MCF 10A (cell line): ENCODE measurements at regions of chr14 and their contacts with region 1.

Region 1: DNA sequence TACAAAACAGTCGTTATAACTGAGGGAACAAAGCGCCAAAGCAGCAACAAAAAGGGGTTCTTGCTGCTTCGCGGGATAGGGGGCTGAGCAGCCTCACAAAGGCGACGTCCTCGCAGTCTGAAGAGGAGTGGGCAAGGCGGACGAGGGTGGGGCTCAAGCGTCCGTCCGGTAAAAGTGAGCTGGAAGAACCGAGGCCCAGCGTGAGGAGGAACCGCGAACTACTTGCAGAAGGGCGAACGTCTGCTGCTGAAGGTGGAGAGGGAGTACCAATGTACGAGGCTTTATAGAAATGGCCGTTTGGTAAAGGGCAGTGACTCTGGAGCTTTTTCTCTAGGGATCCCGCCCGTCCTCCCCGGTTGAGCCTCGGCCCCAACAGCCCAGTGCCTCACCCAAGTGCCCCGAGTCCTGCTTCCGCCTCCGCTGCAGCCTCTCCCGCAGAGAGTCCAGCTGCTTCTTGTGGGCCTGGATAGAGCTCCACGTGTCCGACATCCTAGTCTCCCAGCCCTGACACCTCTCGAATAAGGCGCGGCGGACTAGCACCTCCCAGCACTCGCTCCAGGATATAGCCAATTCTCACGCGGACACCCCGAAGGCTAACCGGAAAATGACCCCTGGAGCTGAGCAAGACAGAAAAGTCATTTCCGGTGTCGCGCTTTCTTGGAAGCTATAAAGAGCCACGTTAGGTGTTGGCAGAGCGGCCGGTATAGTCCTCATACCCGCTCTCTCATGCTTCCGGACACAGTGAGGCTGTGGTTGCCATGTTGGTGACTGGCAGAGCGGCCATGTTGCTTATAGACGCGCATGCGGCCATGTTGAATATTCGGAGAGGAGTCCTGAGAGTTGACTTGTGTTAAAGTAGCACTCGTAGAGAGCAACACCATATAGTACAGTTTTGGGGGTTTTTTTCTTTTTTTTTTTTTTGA is at the start of gene METTL3:
- DNase-seq: peak; percentile 99
- H3K4me3 Mint-ChIP-seq: peak within 1 kb of the TSS; percentile 96
- H3K27ac Mint-ChIP-seq: peak within 1 kb of the TSS; percentile 95
- H3K4me1 Mint-ChIP-seq: peaks cover 13% of the 10 kb centered on the region
- H3K27me3 Mint-ChIP-seq: no peaks in the 10 kb centered on the region
- CTCF ChIP-seq: no peak
- total RNA-seq, gene METTL3: 36.4 and 46.7 TPM in 2 replicates

Region 2: DNA sequence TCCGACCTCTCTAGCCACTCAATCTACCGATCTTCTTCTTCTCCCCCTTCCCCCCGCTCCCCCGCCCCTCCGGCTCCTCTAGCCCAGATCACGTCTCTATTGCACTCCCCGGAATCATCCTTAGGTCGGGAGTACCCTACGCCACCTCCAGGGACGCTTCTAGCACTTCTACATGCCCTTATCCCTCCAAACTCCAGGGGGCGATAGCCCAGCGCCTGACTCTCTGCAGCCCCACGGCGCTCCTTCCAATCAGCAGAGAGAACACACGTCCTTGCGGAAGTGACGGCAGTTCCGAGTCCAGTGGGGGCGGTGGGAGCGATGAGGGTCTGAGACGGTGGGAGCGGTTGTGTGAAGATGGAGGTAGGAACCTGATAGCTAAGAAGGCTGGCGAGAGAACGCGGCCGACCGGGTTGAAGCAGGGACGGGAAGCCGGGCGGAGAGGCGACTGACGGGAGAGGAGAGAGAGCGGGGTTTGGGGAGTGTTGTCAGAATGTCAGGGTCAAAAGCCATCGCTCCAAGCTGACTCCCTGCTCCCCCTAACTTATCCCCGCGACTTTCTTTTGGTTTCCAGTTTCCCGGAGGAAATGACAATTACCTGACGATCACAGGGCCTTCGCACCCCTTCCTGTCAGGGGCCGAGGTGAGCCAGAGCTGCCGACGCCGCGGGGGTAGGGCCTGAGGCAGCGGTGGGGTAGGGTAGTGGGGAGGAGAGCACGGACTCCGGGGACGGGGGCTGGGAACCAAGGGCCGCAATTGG is 33.9 kb before region 1 on chr14 and contains the starts of genes RAB2B and TOX4:
- CTCF ChIA-PET with region 1: interaction called, 10 read pairs
- POLR2A ChIA-PET with region 1: interaction called, 32 read pairs
- intact Hi-C with region 1: no loop called
- DNase-seq: peak; percentile 99
- H3K4me3 Mint-ChIP-seq: peak within 1 kb of the TSS; percentile 87
- H3K27ac Mint-ChIP-seq: peak within 1 kb of the TSS; percentile 98
- H3K4me1 Mint-ChIP-seq: no peaks in the 10 kb centered on the region
- H3K27me3 Mint-ChIP-seq: no peaks in the 10 kb centered on the region
- CTCF ChIP-seq: peak; percentile 90
- total RNA-seq, gene RAB2B: 22.8 and 23.3 TPM in 2 replicates
- total RNA-seq, gene TOX4: 84.1 and 105 TPM in 2 replicates

Region 3: DNA sequence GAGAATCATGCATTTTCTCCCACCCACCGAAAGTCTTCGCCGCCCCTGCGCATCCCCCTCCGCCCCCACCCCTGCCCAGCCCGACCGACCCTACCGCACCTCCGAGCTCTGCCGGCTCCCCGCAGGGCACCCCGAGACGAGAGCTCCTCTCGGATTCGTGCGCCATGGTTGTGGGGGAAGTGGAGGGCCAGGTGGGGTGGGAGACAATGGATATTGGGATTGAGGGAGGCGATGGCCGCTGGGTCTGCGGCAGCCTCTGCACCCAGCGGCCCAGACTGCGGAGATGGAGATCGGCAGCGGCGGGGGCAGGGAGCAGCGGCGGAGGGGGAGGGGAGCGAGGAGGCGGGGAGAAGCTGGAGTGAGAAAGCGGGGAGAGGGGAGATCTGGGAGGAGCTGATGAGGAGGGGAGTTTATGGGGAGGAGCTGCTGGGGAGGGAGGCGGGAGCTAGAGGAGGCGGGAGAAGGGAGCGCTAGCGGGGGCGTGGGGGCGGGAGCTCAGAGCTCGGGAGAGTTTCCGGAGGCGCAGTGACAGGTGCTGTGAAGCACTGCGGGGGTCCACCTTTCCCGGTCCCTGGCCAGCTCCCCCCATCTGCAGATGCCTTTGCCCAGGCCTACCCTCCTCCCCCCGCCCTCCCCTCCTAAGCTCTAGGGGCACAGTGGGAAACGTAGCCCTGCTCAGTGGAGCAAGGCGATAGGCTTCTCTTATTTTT is 15.1 kb after region 1 on chr14 and contains the start of gene SALL2:
- CTCF ChIA-PET with region 1: interaction called, 5 read pairs
- POLR2A ChIA-PET with region 1: interaction called, 12 read pairs
- intact Hi-C with region 1: no loop called
- DNase-seq: no peak
- H3K4me3 Mint-ChIP-seq: peak within 1 kb of the TSS; percentile 33
- H3K27ac Mint-ChIP-seq: no peak within 1 kb of the TSS
- H3K4me1 Mint-ChIP-seq: no peaks in the 10 kb centered on the region
- H3K27me3 Mint-ChIP-seq: peaks cover 22% of the 10 kb centered on the region
- CTCF ChIP-seq: no peak
- total RNA-seq, gene SALL2: 0.05 and 0.09 TPM in 2 replicates